Motor neuron (in vitro differentiated cells): ENCODE measurements at regions of chr1 and their contacts with region 1.

Region 1: DNA sequence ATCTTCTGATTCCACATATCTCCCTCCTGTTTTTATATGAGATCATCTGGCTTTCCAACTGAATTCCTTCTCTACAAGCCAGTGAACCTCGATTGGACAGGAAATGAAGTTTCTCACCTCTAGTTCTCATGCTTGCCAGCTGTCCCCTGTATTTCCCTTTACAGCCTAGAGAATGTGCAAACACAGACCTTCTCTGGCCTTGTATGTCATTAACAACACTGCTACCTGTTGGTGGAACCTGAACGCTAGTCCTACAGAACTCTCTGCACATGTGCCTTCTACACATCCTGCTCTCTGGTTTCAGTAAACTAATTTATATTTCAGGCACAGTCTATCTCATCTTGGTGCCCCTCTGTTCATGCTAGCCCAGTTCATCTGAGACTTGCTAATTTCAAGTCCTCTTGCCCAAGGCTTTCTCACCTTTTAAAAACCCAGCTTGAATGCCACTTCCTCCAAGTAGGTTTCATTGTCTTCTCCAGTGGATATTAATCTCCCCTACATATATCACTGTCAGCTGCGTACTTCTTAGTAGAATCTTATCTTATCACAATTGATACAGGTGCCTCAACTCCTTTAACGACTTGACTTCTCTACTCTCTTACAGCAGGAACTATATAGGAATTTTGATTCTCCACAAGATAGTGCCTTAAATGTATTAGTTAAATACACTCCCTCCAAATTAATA is 549.9 kb downstream of the PLPP3 start:
- ATAC-seq: peak in 1 of 8 experiments; percentile 35
- H3K4me3 ChIP-seq: no peak overlapping the region
- H3K27ac ChIP-seq: no peak overlapping the region
- H3K4me1 ChIP-seq: no peaks in the 10 kb centered on the region

Region 2: DNA sequence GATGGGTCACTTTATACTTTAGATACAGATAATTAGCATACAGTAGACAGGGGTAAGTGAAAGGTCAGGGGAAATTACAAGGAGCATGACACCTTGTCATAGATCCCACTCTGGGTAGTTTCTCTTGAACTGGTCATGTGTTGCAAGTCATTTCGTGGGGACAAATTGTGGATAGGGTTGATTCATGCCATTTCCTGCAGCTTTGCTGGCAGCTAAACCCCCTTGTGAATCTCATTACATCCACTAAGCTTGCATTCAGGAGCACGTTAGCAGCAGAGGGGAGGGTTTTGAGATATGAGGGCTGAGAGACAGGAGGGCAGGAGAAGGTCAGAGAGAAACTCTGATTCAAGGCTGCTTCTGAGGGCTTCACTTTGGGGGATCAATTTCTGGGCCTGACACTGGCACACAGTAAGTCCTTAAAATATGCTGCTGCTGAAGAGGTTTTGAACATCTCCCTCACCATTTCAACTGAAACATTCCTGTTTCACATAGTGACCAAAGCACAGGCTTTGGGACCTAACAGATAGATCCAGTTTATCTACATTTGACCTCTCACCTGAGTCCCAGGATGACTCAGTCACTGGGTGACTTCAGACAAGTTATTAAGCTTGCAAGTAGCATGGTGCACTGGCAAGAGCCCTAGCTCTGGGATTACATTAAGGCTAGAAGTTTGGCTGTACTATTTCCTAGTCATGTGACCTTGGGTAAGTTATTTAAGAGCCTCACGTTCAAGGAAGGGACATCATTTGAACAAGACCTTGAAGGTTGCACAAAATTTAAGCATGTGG is 608.3 kb before region 1 on chr1:
- in situ Hi-C with region 1: no loop called
- ATAC-seq: peak in 6 of 8 experiments; percentile 62 to 93 (median 82)
- H3K4me3 ChIP-seq: no peak overlapping the region
- H3K27ac ChIP-seq: peak overlapping the region; percentile 45 to 62
- H3K4me1 ChIP-seq: peaks cover 10 to 14% of the 10 kb centered on the region in 2 donors

Region 3: GRCh38 chr1:55931081-55931940 is 98.2 kb before region 1 on chr1:
- in situ Hi-C with region 1: loop called in 1 of 9 experiments (anchors 25 kb)
- ATAC-seq: peak in 1 of 8 experiments; percentile 67
- H3K4me3 ChIP-seq: no peak overlapping the region
- H3K27ac ChIP-seq: no peak overlapping the region
- H3K4me1 ChIP-seq: peaks cover 0 to 4% of the 10 kb centered on the region in 2 donors

Region 4: DNA sequence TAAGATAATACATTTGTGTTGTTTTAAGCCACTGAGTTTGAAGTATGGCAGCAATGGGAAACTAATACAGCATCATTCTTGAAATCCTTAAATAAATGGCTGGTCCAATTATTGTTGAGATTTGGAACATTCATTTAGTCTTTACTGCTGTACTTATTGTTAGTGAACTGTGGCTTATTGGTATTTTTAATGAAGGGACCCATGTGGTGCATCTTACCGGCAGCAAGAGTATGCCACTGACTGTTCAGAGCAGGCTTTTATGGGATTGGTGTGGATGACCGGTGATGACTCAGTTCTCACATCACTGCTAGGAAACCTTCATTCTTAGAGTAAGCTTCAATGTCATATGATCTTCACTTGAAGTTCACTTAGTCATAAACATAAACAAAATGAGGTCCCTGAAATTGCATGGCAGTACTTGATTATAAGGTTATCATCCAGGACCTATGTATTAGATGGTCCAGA is 647.1 kb after region 1 on chr1:
- in situ Hi-C with region 1: no loop called
- ATAC-seq: peak in 7 of 8 experiments; percentile 56 to 99 (median 90)
- H3K4me3 ChIP-seq: no peak overlapping the region
- H3K27ac ChIP-seq: no peak overlapping the region
- H3K4me1 ChIP-seq: no peaks in the 10 kb centered on the region